ENCODE measurements at regions of chr13 and their contacts with region 1.

Region 1: GRCh38 chr13:78121459-78122348 is 203.1 kb upstream of the EDNRB start:
- DNase-seq: peak in 5 of 9 experiments; percentile 18 to 69 (median 30)
- ATAC-seq: peak; percentile 52
- H3K4me3 ChIP-seq: no peak overlapping the region
- H3K4me3 Mint-ChIP-seq: no peak overlapping the region
- H3K27ac ChIP-seq: no peak overlapping the region
- H3K27ac Mint-ChIP-seq: no peak overlapping the region
- H3K4me1 ChIP-seq: no peaks in the 10 kb centered on the region
- H3K4me1 Mint-ChIP-seq: peaks cover 5% of the 10 kb centered on the region
- H3K27me3 ChIP-seq: no peaks in the 10 kb centered on the region
- H3K27me3 Mint-ChIP-seq: peaks cover 10% of the 10 kb centered on the region
- CTCF ChIP-seq: peak; percentile 90

Region 2: DNA sequence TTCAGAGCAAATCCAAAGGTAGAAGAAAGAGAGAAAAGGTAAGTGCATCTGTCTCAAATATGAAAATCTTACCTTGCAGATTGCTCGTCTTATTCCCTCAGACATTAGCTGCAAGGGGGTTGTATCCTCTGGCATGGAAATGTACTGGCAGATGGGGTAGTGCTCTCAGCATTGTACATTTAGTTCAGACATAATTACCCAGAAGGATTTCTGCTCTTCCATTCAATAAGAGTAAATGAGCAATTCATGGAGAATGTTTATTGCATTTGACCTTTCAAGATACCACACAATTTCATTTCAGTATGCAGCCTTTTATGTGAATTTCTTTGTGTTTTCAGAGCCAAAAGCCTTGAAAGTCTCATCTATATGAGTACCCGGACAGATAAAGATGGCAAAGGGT is 522.4 kb before region 1 on chr13:
- CTCF ChIA-PET with region 1: no interaction called
- POLR2A ChIA-PET with region 1: no interaction called
- intact Hi-C with region 1: loop called (anchors 5 kb)
- DNase-seq: no peak
- ATAC-seq: no peak
- H3K4me3 ChIP-seq: no peak overlapping the region
- H3K4me3 Mint-ChIP-seq: no peak overlapping the region
- H3K27ac ChIP-seq: no peak overlapping the region
- H3K27ac Mint-ChIP-seq: no peak overlapping the region
- H3K4me1 ChIP-seq: no peaks in the 10 kb centered on the region
- H3K4me1 Mint-ChIP-seq: no peaks in the 10 kb centered on the region
- H3K27me3 ChIP-seq: no peaks in the 10 kb centered on the region
- H3K27me3 Mint-ChIP-seq: peaks cover 14% of the 10 kb centered on the region
- CTCF ChIP-seq: no peak

Region 3: GRCh38 chr13:77779552-77780272 is 342.0 kb before region 1 on chr13:
- CTCF ChIA-PET with region 1: interaction called, 27 read pairs
- POLR2A ChIA-PET with region 1: no interaction called
- intact Hi-C with region 1: loop called (anchors 1 kb)
- DNase-seq: peak in 3 of 9 experiments; percentile 14 to 66 (median 57)
- ATAC-seq: peak; percentile 46
- H3K4me3 ChIP-seq: no peak overlapping the region
- H3K4me3 Mint-ChIP-seq: no peak overlapping the region
- H3K27ac ChIP-seq: no peak overlapping the region
- H3K27ac Mint-ChIP-seq: no peak overlapping the region
- H3K4me1 ChIP-seq: peaks cover 6% of the 10 kb centered on the region
- H3K4me1 Mint-ChIP-seq: peaks cover 12% of the 10 kb centered on the region
- H3K27me3 ChIP-seq: no peaks in the 10 kb centered on the region
- H3K27me3 Mint-ChIP-seq: peaks cover 3% of the 10 kb centered on the region
- CTCF ChIP-seq: peak; percentile 65

Region 4: GRCh38 chr13:78105656-78106055 is 16.0 kb before region 1 on chr13:
- CTCF ChIA-PET with region 1: no interaction called
- POLR2A ChIA-PET with region 1: no interaction called
- intact Hi-C with region 1: no loop called
- DNase-seq: no peak
- ATAC-seq: no peak
- H3K4me3 ChIP-seq: no peak overlapping the region
- H3K4me3 Mint-ChIP-seq: no peak overlapping the region
- H3K27ac ChIP-seq: no peak overlapping the region
- H3K27ac Mint-ChIP-seq: no peak overlapping the region
- H3K4me1 ChIP-seq: no peaks in the 10 kb centered on the region
- H3K4me1 Mint-ChIP-seq: no peaks in the 10 kb centered on the region
- H3K27me3 ChIP-seq: no peaks in the 10 kb centered on the region
- H3K27me3 Mint-ChIP-seq: no peaks in the 10 kb centered on the region
- CTCF ChIP-seq: no peak